ENCODE measurements at regions of chr14 and their contacts with region 1.

Region 1: DNA sequence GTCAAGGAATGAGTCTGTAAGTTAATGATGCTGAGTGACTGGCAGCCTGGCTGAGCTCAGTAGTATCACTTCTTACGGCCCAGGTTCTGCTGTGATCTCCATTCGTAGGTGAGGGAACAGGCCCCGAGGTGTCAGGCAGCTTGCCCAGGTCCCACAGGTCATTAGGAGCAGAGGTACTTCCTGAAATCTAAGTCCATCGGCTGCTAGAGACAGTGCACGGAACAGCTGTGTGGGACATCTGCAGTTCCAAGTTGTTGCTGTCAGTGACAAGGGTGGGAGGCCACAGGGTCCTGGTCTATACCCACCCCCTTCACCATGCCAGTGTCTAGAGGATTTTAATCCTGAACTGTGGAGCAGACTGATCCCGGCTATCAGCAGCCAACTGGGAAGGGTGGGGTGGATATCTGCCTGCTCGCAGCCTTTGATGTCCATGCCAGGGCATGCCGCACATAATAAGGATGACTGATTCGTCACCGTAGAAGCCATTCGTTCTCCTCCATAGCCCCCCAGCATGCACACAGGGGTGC is 82.3 kb upstream of the RIN3 start:
- DNase-seq: no peak
- ATAC-seq: peak in 1 of 8 donors; percentile 10
- H3K4me3 ChIP-seq: no peak overlapping the region
- H3K27ac ChIP-seq: no peak overlapping the region
- H3K4me1 ChIP-seq: peaks cover 0 to 5% (median 0%) of the 10 kb centered on the region in 9 donors
- H3K27me3 ChIP-seq: peaks cover 0 to 10% (median 0%) of the 10 kb centered on the region in 7 donors
- CTCF ChIP-seq: no peak

Region 2: GRCh38 chr14:91496790-91497189 is 934.5 kb before region 1 on chr14:
- intact Hi-C with region 1: loop called in 1 of 10 experiments (anchors 5 kb)
- DNase-seq: no peak
- ATAC-seq: no peak
- H3K4me3 ChIP-seq: no peak overlapping the region
- H3K27ac ChIP-seq: peak overlapping the region in 1 of 10 donors; percentile 39
- H3K4me1 ChIP-seq: peaks cover 15 to 93% (median 78%) of the 10 kb centered on the region in 9 donors
- H3K27me3 ChIP-seq: no peaks in the 10 kb centered on the region
- CTCF ChIP-seq: no peak

Region 3: GRCh38 chr14:92520092-92520745 is 89.0 kb after region 1 on chr14:
- intact Hi-C with region 1: no loop called
- DNase-seq: no peak
- ATAC-seq: peak in 1 of 8 donors; percentile 27
- H3K4me3 ChIP-seq: no peak overlapping the region
- H3K27ac ChIP-seq: peak overlapping the region in 1 of 10 donors; percentile 81
- H3K4me1 ChIP-seq: peaks cover 0 to 76% (median 25%) of the 10 kb centered on the region in 9 donors
- H3K27me3 ChIP-seq: no peaks in the 10 kb centered on the region
- CTCF ChIP-seq: no peak